RWPE1 (cell line): ENCODE measurements at regions of chr10 and their contacts with region 1.

Region 1: GRCh38 chr10:107931815-107932214 is 767.3 kb upstream of the SORCS1 start:
- DNase-seq: no peak
- H3K27ac ChIP-seq: no peak overlapping the region
- CTCF ChIP-seq: no peak

Region 2: DNA sequence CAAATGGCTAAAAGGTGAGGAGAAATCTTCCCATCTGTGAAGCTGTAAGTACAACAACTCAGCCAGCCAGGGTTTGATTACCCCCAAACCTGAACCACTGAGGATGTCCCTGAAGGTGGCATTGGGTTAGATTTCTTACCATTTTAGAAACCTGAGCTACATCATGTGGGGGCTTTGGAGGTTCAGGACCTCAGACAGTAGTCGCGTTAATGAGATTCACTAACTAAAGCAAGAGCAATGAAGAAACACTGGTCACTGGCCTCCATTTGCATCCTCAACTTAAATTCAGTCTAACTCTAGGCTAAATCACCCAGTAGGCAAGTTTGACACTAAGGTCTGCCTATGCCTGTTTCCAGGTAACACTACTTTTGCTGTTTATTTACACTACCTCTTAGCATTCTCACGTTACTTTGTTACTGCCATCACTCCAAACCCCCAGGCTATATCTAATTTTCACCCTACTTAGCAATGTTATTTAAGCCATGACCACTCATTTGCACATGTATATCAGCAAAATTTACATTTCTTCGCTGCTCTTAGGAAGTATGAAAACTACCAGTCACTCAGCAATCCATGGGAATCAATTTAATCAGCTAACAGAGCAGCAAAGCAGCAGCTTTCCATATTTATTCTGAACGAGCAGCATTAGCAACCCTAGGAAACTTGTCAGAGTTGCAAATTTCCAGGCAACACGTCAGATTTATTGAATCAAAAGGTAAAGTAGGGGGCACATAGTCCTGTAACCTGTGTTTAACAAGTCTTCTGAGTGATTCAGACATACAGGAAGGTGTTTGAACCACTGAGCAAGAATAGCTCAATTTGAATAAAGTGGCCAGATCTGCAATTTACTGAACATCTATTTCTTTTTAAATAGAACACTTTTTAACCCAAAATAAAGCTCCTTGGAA is 21.1 kb after region 1 on chr10:
- CTCF ChIA-PET with region 1: interaction called, 10 read pairs
- POLR2A ChIA-PET with region 1: no interaction called
- DNase-seq: no peak
- H3K27ac ChIP-seq: no peak overlapping the region
- CTCF ChIP-seq: no peak